GM10248 (cell line): ENCODE measurements at regions of chr13 and their contacts with region 1.

Region 1: DNA sequence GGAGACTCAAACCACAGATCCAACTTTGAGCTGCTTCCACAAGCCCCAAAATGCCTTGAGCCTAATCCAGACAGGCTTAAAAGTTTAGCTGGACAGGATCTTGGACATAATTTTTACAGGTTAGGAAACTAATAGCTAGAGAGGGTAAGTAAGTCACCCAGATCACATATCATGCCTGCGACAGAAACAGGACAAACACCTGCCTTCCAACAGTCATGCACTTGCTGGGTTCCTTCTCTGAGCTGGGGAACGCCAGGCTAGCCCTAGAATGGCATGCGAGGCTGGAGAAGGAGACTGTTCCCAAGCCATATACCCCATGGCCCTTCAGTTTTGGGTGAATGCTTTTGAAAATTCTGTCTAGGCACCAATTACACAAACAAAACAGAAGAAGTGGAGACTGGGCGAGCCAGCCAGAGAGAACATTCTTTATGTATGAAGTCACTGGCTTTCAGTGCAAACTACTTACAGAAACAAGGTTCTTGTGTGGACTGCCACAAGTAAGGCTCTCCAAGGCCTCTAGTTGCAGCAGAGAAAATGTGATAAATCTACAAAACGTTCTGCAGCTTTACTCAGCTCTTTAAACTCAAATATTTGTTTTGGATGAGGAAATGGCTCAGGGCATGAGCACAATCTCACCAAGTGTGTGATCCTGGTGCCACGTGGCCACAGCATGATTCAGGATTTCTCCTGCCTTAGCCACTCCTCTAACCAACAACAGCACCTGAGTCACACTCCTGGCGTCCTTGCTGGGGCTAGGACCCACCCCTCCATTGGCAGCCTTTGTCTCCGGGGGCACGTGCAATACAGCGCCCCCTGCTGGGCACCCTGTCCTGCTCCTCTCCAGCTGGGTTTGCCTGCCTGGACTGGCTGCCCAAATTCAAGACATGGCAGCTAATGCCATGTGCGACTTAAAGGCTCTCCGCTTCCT is 73.4 kb upstream of the UBL3 start:
- DNase-seq: peak; percentile 66
- CTCF ChIP-seq: peak; percentile 74

Region 2: DNA sequence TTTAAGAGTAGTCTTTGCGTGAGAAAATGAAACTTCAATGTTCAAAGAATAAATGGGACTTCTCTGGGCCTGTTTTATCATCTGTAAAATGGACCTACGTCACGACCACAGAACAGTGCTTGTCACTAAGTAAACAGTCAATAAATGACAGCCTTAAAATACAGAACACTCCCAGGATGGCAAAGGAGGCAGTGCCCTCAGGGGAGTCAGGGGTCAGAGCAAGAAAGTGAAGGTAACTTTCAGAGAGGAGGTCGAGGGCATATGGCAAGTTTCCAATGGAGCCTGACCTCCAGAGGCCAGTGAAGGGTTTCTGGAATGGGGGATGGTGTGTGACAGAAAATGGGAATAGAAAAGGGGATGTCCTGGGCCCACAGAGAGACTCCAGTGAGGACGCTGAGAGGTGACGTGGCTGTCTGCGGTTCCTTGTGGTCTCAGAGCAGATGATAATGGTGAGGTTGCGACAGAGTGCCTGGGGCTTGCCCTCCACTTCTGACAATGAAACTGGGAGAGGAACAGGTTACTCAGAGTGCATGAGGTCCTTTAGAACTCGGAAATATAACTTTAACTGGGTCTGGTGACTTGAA is 165.2 kb before region 1 on chr13:
- CTCF ChIA-PET with region 1: interaction called, 14 read pairs
- POLR2A ChIA-PET with region 1: no interaction called
- DNase-seq: peak; percentile 69
- CTCF ChIP-seq: no peak

Region 3: DNA sequence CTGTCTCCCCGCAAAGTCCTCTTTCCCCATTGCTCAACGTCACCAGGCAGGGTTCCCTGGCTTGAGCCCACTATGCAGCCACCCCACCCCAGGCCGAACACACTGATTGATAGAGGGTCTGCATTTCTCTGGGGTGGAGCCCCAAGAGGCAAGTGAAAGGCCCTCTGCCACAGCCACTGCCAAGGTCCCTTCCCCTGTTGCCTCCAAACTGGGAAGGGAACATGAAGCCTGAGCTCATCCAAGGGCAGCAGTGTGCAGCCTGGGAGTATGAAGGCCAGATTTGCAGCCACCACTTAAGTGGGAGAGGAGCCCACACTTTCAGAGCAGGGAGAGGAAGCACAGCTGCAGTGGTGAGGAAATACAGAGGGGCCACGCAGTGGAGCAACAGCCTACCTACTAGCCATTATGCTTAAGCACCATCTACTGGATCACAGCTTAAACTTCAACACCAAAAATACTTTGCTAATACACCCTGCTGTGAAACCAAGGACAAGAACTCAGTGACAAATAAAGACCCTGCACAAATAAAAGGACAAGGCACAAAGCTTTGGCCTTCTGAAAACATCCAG is 122.0 kb before region 1 on chr13:
- CTCF ChIA-PET with region 1: no interaction called
- POLR2A ChIA-PET with region 1: no interaction called
- DNase-seq: no peak
- CTCF ChIP-seq: peak; percentile 26

Region 4: DNA sequence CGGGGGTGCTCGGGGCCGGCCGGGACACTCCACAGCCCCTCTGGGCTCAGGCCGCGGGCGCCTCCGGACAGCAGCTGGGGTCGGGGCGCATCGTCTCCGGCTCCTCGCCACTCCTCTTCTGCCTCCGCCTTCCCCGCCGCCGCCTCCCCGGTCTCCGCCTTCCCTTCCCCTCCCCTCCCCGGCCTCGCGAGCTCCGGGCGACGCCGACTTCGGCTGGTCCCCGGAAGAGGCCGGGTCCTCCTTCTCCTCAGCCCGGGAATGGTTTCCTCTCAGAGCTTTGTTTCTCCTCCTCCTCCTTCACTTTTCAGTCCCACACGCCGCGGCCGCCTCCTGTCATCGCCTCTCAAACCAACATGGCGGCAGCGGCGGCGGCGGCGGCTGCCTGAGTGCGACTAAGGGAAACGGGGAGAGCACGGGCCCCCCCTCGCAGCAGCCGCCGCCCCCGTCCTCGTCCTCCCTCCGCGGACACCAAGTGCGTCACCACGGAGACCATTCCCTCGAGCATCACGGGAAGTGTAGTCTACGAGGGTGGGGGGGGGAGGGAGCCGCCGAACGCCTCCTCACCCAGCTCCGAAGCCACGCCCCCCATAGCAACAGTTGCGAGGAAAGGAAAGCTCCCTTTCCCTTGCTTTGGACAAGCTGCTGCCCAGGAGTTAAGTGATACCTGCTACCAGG is 73.5 kb before region 1 on chr13 and contains the start of gene UBL3:
- CTCF ChIA-PET with region 1: interaction called, 11 read pairs
- POLR2A ChIA-PET with region 1: no interaction called
- DNase-seq: peak; percentile 97
- CTCF ChIP-seq: no peak

Region 5: GRCh38 chr13:29892151-29892550 is 31.7 kb before region 1 on chr13:
- CTCF ChIA-PET with region 1: interaction called, 19 read pairs
- POLR2A ChIA-PET with region 1: no interaction called
- DNase-seq: no peak
- CTCF ChIP-seq: no peak

Region 6: GRCh38 chr13:29935309-29935981 is 11.6 kb after region 1 on chr13:
- CTCF ChIA-PET with region 1: interaction called, 99 read pairs
- POLR2A ChIA-PET with region 1: no interaction called
- DNase-seq: peak; percentile 80
- CTCF ChIP-seq: no peak